B cell (primary cell): ENCODE measurements at regions of chr16 and their contacts with region 1.

Region 1: GRCh38 chr16:46789499-46790414 is 41.2 kb downstream of the C16orf87 start:
- DNase-seq: peak; percentile 89
- ATAC-seq: peak; percentile 94
- H3K4me3 ChIP-seq: peak overlapping the region; percentile 21 to 90 (median 66)
- H3K4me3 Mint-ChIP-seq: peak overlapping the region; percentile 85
- H3K27ac ChIP-seq: peak overlapping the region; percentile 42 to 70
- H3K27ac Mint-ChIP-seq: peak overlapping the region; percentile 81
- H3K4me1 ChIP-seq: peaks cover 36 to 42% of the 10 kb centered on the region in 2 donors
- H3K4me1 Mint-ChIP-seq: peaks cover 52% of the 10 kb centered on the region
- H3K27me3 ChIP-seq: no peaks in the 10 kb centered on the region
- H3K27me3 Mint-ChIP-seq: no peaks in the 10 kb centered on the region
- CTCF ChIP-seq: no peak

Region 2: GRCh38 chr16:46621006-46621933 is 168.5 kb before region 1 on chr16 and contains the start of gene SHCBP1:
- CTCF ChIA-PET with region 1: no interaction called
- POLR2A ChIA-PET with region 1: no interaction called
- intact Hi-C with region 1: loop called (anchors 2 kb)
- DNase-seq: peak; percentile 78
- ATAC-seq: peak; percentile 94
- H3K4me3 ChIP-seq: peak within 1 kb of the TSS; percentile 54 to 78 (median 70)
- H3K4me3 Mint-ChIP-seq: peak within 1 kb of the TSS; percentile 97
- H3K27ac ChIP-seq: peak within 1 kb of the TSS; percentile 39 to 48
- H3K27ac Mint-ChIP-seq: peak within 1 kb of the TSS; percentile 73
- H3K4me1 ChIP-seq: peaks cover 15 to 16% of the 10 kb centered on the region in 2 donors
- H3K4me1 Mint-ChIP-seq: peaks cover 28% of the 10 kb centered on the region
- H3K27me3 ChIP-seq: no peaks in the 10 kb centered on the region
- H3K27me3 Mint-ChIP-seq: no peaks in the 10 kb centered on the region
- CTCF ChIP-seq: no peak
- total RNA-seq, gene SHCBP1: 1.7 and 4.2 TPM in 2 replicates

Region 3: DNA sequence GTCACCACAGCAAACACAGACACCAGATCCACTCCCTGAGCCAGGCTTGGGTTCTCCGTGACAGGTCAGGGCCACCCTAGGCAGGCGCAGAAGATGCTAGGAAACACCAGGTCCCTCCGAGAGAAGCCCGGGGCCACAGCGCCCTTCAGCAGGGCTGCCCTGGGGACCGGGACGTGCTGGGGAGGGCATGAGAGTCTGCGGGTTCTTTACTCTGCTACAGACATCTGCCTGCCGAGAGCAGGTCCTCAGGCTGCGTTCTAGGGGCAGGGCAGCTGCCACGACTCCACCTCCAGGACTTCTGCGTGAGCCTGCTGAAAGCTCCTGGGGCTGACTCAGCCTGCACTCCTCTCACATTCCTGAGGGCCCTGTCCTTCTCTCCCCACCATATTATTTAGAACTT is 53.1 kb before region 1 on chr16:
- CTCF ChIA-PET with region 1: no interaction called
- POLR2A ChIA-PET with region 1: no interaction called
- intact Hi-C with region 1: no loop called
- DNase-seq: no peak
- ATAC-seq: no peak
- H3K4me3 ChIP-seq: no peak overlapping the region
- H3K4me3 Mint-ChIP-seq: no peak overlapping the region
- H3K27ac ChIP-seq: no peak overlapping the region
- H3K27ac Mint-ChIP-seq: no peak overlapping the region
- H3K4me1 ChIP-seq: peaks cover 2 to 7% of the 10 kb centered on the region in 2 donors
- H3K4me1 Mint-ChIP-seq: peaks cover 6% of the 10 kb centered on the region
- H3K27me3 ChIP-seq: no peaks in the 10 kb centered on the region
- H3K27me3 Mint-ChIP-seq: no peaks in the 10 kb centered on the region
- CTCF ChIP-seq: no peak

Region 4: GRCh38 chr16:46801428-46802049 is 11.8 kb after region 1 on chr16:
- CTCF ChIA-PET with region 1: interaction called, 14 read pairs
- POLR2A ChIA-PET with region 1: interaction called, 9 read pairs
- intact Hi-C with region 1: no loop called
- DNase-seq: peak; percentile 30
- ATAC-seq: no peak
- H3K4me3 ChIP-seq: no peak overlapping the region
- H3K4me3 Mint-ChIP-seq: no peak overlapping the region
- H3K27ac ChIP-seq: no peak overlapping the region
- H3K27ac Mint-ChIP-seq: no peak overlapping the region
- H3K4me1 ChIP-seq: no peaks in the 10 kb centered on the region
- H3K4me1 Mint-ChIP-seq: peaks cover 4% of the 10 kb centered on the region
- H3K27me3 ChIP-seq: no peaks in the 10 kb centered on the region
- H3K27me3 Mint-ChIP-seq: no peaks in the 10 kb centered on the region
- CTCF ChIP-seq: peak; percentile 44

Region 5: GRCh38 chr16:46808997-46809396 is 19.2 kb after region 1 on chr16:
- CTCF ChIA-PET with region 1: interaction called, 3 read pairs
- POLR2A ChIA-PET with region 1: interaction called, 7 read pairs
- intact Hi-C with region 1: loop called (anchors 2 kb)
- DNase-seq: peak; percentile 54
- ATAC-seq: peak; percentile 75
- H3K4me3 ChIP-seq: peak overlapping the region in 1 of 5 experiments; percentile 25
- H3K4me3 Mint-ChIP-seq: no peak overlapping the region
- H3K27ac ChIP-seq: no peak overlapping the region
- H3K27ac Mint-ChIP-seq: no peak overlapping the region
- H3K4me1 ChIP-seq: peaks cover 17 to 20% of the 10 kb centered on the region in 2 donors
- H3K4me1 Mint-ChIP-seq: peaks cover 24% of the 10 kb centered on the region
- H3K27me3 ChIP-seq: no peaks in the 10 kb centered on the region
- H3K27me3 Mint-ChIP-seq: no peaks in the 10 kb centered on the region
- CTCF ChIP-seq: no peak

Region 6: GRCh38 chr16:46883690-46884512 is 94.1 kb after region 1 on chr16 and contains the start of gene GPT2:
- CTCF ChIA-PET with region 1: no interaction called
- POLR2A ChIA-PET with region 1: no interaction called
- intact Hi-C with region 1: loop called (anchors 2 kb)
- DNase-seq: peak; percentile 83
- ATAC-seq: peak; percentile 95
- H3K4me3 ChIP-seq: peak within 1 kb of the TSS; percentile 48 to 84 (median 72)
- H3K4me3 Mint-ChIP-seq: peak within 1 kb of the TSS; percentile 89
- H3K27ac ChIP-seq: no peak within 1 kb of the TSS
- H3K27ac Mint-ChIP-seq: peak within 1 kb of the TSS; percentile 67
- H3K4me1 ChIP-seq: peaks cover 9 to 11% of the 10 kb centered on the region in 2 donors
- H3K4me1 Mint-ChIP-seq: peaks cover 18% of the 10 kb centered on the region
- H3K27me3 ChIP-seq: peaks cover 0 to 5% (median 2%) of the 10 kb centered on the region in 4 experiments
- H3K27me3 Mint-ChIP-seq: no peaks in the 10 kb centered on the region
- CTCF ChIP-seq: no peak
- total RNA-seq, gene GPT2: 9.9 and 11.0 TPM in 2 replicates